Stomach (tissue), 19 donors: ENCODE measurements at regions of chr11 and their contacts with region 1.

Region 1: DNA sequence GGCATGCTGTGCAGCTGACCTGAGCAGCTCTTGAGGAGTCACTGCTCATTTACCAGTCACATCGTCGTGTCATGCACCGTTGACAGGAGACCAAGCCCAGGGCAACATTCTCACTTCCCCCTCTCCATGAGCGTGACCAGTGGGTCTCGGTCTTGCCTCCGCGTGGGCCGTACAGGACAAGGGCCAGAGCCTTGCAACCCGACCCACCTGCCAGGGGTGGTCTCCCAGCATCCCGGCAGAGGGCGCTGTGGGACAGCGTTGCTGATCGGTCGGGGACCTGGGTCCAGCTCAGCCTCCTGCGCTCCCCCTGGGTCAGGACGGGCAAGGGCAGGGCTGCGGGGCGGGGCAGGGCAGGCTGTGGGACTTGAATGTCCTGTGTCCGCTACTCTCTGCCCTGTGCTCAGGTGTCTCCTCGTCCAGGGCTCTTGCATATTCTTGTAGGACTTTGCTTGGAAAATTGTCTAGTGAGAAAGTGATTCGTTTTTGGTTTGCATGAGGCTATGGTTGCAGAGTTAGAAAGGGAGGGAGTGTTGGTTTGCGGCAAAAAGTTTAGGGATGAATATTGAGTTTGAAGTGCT is 16.2 kb downstream of the EIF4G2 start:
- DNase-seq: peak; percentile 89 to 92
- H3K4me3 ChIP-seq: peak overlapping the region in 1 of 4 donors; percentile 23
- H3K27ac ChIP-seq: no peak overlapping the region
- H3K4me1 ChIP-seq: peaks cover 0 to 28% (median 10%) of the 10 kb centered on the region in 4 donors
- H3K27me3 ChIP-seq: no peaks in the 10 kb centered on the region
- CTCF ChIP-seq: peak in 5 of 7 experiments; percentile 83 to 93 (median 89)
- EP300 ChIP-seq: no peak
- POLR2A ChIP-seq: no peak

Region 2: DNA sequence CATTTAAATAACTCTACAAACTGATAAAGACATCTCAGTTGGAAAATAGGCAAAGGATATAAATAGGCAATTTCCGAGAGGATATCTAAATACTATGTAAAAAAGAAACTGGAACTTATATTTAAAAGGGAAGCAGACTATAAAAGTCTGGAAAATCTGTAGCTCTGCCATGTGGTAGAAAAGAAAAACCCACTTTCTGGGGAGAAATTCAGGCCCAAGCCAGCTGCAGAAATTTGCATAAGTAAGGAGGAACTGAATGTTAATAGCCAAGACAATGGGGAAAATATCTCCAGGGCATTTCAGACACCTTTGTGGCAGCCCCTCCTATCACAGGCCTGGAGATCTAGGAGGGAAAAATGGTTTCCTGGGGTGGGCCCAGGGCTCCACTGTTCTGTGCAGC is 163.1 kb after region 1 on chr11:
- intact Hi-C with region 1: no loop called
- DNase-seq: no peak
- H3K4me3 ChIP-seq: no peak overlapping the region
- H3K27ac ChIP-seq: no peak overlapping the region
- H3K4me1 ChIP-seq: no peaks in the 10 kb centered on the region
- H3K27me3 ChIP-seq: peaks cover 0 to 16% (median 0%) of the 10 kb centered on the region in 3 donors
- CTCF ChIP-seq: no peak
- EP300 ChIP-seq: no peak
- POLR2A ChIP-seq: no peak

Region 3: DNA sequence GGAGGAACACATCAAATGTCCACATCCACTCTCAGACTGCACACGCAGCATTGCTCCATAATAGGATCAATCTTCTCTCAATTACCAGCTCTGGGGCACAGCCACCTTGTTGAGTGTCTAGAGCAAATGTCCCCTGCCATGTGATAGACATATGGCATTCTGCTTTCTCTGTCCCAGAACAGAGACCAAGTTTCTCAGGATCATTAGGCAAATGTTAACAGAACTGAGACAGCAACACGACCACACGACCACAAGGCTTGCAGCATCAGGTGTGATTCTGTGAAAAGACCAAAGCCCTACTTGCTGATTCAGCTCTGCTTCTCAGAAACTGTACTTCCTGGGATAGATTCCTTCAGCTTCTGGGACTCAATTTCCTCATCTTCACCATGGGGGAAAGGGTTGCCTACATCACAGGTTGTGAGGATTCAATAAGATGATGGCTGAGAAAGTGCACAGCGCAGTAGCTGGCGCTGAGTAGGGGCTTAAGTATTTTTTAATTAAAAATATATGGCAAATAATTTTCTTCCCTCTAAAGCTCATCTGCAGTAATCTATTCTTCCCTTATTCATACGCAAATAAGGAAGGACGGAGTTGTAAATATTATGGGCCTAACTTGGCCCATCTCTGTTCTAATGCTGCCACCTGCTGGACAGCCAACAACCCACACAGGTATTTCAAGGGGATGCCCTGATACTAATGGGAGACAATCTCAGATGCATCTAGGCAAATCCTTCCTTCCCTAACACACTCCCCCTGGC is 995.0 kb after region 1 on chr11:
- intact Hi-C with region 1: loop called (anchors 10 kb)
- DNase-seq: peak; percentile 79 to 91
- H3K4me3 ChIP-seq: no peak overlapping the region
- H3K27ac ChIP-seq: no peak overlapping the region
- H3K4me1 ChIP-seq: peaks cover 0 to 7% (median 0%) of the 10 kb centered on the region in 4 donors
- H3K27me3 ChIP-seq: no peaks in the 10 kb centered on the region
- CTCF ChIP-seq: peak in 5 of 7 experiments; percentile 69 to 88 (median 84)
- EP300 ChIP-seq: no peak
- POLR2A ChIP-seq: no peak